Naive thymus-derived CD4-positive, alpha-beta T cell (primary cell): ENCODE measurements at regions of chr19 and their contacts with region 1.

Region 1: GRCh38 chr19:38335949-38336637 is 463 bp downstream of the CATSPERG start:
- DNase-seq: peak; percentile 86 to 94 (median 93)
- ATAC-seq: peak; percentile 77
- H3K4me3 ChIP-seq: peak overlapping the region; percentile 92
- H3K4me3 Mint-ChIP-seq: peak overlapping the region; percentile 92 to 100 (median 96)
- H3K27ac ChIP-seq: peak overlapping the region; percentile 86
- H3K27ac Mint-ChIP-seq: peak overlapping the region; percentile 91 to 100 (median 97)
- H3K4me1 ChIP-seq: peaks cover 3 to 5% of the 10 kb centered on the region in 2 donors
- H3K4me1 Mint-ChIP-seq: peaks cover 16 to 28% (median 17%) of the 10 kb centered on the region in 7 donors
- H3K27me3 ChIP-seq: no peaks in the 10 kb centered on the region
- H3K27me3 Mint-ChIP-seq: no peaks in the 10 kb centered on the region

Region 2: DNA sequence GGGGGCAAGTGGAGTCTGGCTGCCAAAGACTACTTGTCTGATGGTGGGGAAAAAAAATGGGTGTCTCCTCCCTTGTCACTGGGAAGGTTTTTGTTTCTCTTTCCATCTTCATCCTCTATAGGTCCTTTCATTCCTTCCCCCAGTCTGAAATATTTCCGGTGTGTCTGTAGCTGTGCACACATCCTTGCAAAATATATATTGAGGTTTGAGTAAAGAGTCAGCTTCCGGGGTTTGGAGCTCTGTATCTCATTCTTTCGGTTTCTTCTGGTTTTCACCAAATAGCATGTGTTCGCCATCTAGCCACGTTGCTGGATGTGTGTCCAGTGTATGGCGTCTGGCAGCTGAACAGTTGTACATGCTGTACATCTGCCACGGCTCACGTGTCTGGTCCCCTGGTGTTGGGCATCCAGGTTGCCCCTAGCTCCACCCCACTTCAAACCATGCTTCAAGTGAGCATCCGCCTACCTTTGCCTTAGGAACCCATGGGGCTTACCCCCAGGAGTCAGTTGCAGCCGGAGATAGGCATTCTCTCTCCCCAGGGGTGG is 286.9 kb before region 1 on chr19:
- CTCF ChIA-PET with region 1: no interaction called
- POLR2A ChIA-PET with region 1: no interaction called
- intact Hi-C with region 1: loop called in 1 of 2 experiments (anchors 1 kb)
- DNase-seq: peak; percentile 20 to 87 (median 82)
- ATAC-seq: peak; percentile 89
- H3K4me3 ChIP-seq: peak overlapping the region; percentile 19
- H3K4me3 Mint-ChIP-seq: peak overlapping the region; percentile 71 to 91 (median 85)
- H3K27ac ChIP-seq: peak overlapping the region; percentile 74
- H3K27ac Mint-ChIP-seq: peak overlapping the region; percentile 94 to 100 (median 97)
- H3K4me1 ChIP-seq: peaks cover 20 to 36% of the 10 kb centered on the region in 2 donors
- H3K4me1 Mint-ChIP-seq: peaks cover 22 to 56% (median 44%) of the 10 kb centered on the region in 7 donors
- H3K27me3 ChIP-seq: no peaks in the 10 kb centered on the region
- H3K27me3 Mint-ChIP-seq: peaks cover 0 to 2% (median 0%) of the 10 kb centered on the region in 5 donors

Region 3: DNA sequence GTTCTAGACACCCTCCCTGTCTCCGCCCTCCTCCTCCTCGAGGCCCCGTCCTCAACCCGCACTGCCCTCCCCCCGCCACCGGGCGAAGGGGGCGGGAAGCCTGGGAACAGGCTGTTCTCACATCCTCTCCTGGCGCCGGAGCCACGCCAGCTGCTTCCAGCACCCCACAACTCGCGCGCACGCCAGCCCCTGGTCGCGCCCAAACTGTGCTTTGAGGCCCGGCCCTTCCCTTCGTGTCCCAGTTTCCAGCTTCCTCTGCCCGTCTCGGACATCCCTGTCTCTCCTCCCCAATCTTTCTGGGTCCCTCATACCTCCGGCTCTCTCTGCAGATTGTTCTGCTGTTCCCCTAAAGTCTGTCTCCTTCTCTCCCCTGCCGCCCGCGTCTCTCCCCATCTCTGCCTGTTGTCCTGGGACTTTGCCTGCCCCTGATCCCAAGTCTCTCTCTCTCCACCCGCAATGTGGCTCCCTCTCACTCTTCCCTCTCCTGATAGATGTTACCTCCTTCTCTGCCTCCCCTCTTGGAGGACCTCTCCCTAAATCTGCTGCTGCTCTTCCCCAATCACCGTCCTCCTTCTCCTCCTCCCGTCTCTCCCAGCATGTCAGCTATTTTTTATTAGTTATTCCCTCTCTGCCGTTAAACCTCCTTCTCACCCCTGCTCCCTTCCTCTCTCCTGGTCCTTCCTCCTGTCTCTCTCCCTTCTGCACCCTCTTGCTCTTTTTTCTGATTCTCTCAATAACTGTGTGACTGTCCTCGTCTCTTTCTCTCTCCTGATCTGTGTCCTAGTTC is 126.2 kb before region 1 on chr19:
- CTCF ChIA-PET with region 1: no interaction called
- POLR2A ChIA-PET with region 1: no interaction called
- intact Hi-C with region 1: no loop called
- DNase-seq: no peak
- ATAC-seq: no peak
- H3K4me3 ChIP-seq: no peak overlapping the region
- H3K4me3 Mint-ChIP-seq: peak overlapping the region in 5 of 10 donors; percentile 6 to 64 (median 58)
- H3K27ac ChIP-seq: no peak overlapping the region
- H3K27ac Mint-ChIP-seq: peak overlapping the region in 2 of 9 donors; percentile 2 to 10
- H3K4me1 ChIP-seq: peaks cover 0 to 8% of the 10 kb centered on the region in 2 donors
- H3K4me1 Mint-ChIP-seq: peaks cover 13 to 27% (median 22%) of the 10 kb centered on the region in 7 donors
- H3K27me3 ChIP-seq: peaks cover 0 to 13% of the 10 kb centered on the region in 2 donors
- H3K27me3 Mint-ChIP-seq: peaks cover 32 to 56% (median 49%) of the 10 kb centered on the region in 5 donors

Region 4: GRCh38 chr19:38229585-38230073 is 106.5 kb before region 1 on chr19:
- CTCF ChIA-PET with region 1: interaction called, 3 read pairs
- POLR2A ChIA-PET with region 1: no interaction called
- intact Hi-C with region 1: loop called (anchors 1 to 5 kb)
- DNase-seq: peak in 8 of 9 donors; percentile 20 to 75 (median 41)
- ATAC-seq: peak; percentile 91
- H3K4me3 ChIP-seq: no peak overlapping the region
- H3K4me3 Mint-ChIP-seq: peak overlapping the region; percentile 7 to 77 (median 54)
- H3K27ac ChIP-seq: no peak overlapping the region
- H3K27ac Mint-ChIP-seq: no peak overlapping the region
- H3K4me1 ChIP-seq: peaks cover 0 to 7% of the 10 kb centered on the region in 2 donors
- H3K4me1 Mint-ChIP-seq: peaks cover under 1 to 20% (median 15%) of the 10 kb centered on the region in 7 donors
- H3K27me3 ChIP-seq: peaks cover 5 to 16% of the 10 kb centered on the region in 2 donors
- H3K27me3 Mint-ChIP-seq: peaks cover 45 to 66% (median 57%) of the 10 kb centered on the region in 5 donors

Region 5: GRCh38 chr19:38315657-38316476 is 20.2 kb before region 1 on chr19 and contains the start of gene YIF1B:
- CTCF ChIA-PET with region 1: interaction called, 3 read pairs
- POLR2A ChIA-PET with region 1: interaction called, 3 read pairs
- intact Hi-C with region 1: loop called (anchors 1 kb)
- DNase-seq: peak; percentile 93 to 97 (median 95)
- ATAC-seq: peak; percentile 95
- H3K4me3 ChIP-seq: peak within 1 kb of the TSS; percentile 90
- H3K4me3 Mint-ChIP-seq: peak within 1 kb of the TSS; percentile 87 to 96 (median 91)
- H3K27ac ChIP-seq: peak within 1 kb of the TSS; percentile 97
- H3K27ac Mint-ChIP-seq: peak within 1 kb of the TSS; percentile 90 to 97 (median 93)
- H3K4me1 ChIP-seq: peaks cover 14 to 30% of the 10 kb centered on the region in 2 donors
- H3K4me1 Mint-ChIP-seq: peaks cover 29 to 57% (median 48%) of the 10 kb centered on the region in 7 donors
- H3K27me3 ChIP-seq: no peaks in the 10 kb centered on the region
- H3K27me3 Mint-ChIP-seq: no peaks in the 10 kb centered on the region
- total RNA-seq, gene YIF1B: 26.1 to 84.7 (median 38.0) TPM

Region 6: DNA sequence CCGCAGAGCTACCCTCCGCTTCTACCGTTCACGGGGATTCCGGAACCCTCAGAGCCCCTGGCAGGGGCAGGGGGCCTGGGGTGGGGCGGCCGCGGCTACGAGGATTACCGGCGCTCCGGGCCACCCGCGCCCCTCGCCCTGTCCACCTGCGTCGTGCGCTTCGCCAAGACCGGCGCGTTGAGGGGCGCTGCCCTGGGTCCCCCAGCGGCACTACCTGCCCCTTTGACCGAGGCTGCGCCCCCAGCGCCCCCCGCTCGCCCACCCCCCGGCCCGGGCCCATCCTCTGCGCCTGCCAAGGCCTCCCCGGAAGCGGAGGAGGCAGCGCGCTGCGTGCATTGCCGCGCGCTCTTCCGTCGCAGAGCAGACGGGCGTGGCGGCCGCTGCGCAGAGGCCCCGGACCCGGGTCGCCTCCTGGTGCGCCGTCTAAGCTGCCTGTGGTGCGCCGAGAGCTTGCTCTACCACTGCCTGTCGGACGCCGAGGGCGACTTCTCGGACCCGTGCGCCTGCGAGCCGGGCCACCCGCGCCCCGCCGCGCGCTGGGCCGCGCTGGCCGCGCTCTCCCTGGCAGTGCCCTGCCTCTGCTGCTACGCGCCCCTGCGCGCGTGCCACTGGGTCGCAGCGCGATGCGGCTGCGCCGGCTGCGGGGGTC is 59.5 kb after region 1 on chr19:
- CTCF ChIA-PET with region 1: no interaction called
- POLR2A ChIA-PET with region 1: no interaction called
- intact Hi-C with region 1: no loop called
- DNase-seq: peak in 8 of 9 donors; percentile 36 to 66 (median 58)
- ATAC-seq: peak; percentile 79
- H3K4me3 ChIP-seq: peak overlapping the region; percentile 56
- H3K4me3 Mint-ChIP-seq: peak overlapping the region; percentile 65 to 84 (median 81)
- H3K27ac ChIP-seq: peak overlapping the region; percentile 60
- H3K27ac Mint-ChIP-seq: peak overlapping the region in 6 of 9 donors; percentile 5 to 91 (median 82)
- H3K4me1 ChIP-seq: peaks cover 5 to 19% of the 10 kb centered on the region in 2 donors
- H3K4me1 Mint-ChIP-seq: peaks cover 8 to 27% (median 22%) of the 10 kb centered on the region in 7 donors
- H3K27me3 ChIP-seq: no peaks in the 10 kb centered on the region
- H3K27me3 Mint-ChIP-seq: peaks cover 0 to 33% (median 5%) of the 10 kb centered on the region in 5 donors

Region 7: DNA sequence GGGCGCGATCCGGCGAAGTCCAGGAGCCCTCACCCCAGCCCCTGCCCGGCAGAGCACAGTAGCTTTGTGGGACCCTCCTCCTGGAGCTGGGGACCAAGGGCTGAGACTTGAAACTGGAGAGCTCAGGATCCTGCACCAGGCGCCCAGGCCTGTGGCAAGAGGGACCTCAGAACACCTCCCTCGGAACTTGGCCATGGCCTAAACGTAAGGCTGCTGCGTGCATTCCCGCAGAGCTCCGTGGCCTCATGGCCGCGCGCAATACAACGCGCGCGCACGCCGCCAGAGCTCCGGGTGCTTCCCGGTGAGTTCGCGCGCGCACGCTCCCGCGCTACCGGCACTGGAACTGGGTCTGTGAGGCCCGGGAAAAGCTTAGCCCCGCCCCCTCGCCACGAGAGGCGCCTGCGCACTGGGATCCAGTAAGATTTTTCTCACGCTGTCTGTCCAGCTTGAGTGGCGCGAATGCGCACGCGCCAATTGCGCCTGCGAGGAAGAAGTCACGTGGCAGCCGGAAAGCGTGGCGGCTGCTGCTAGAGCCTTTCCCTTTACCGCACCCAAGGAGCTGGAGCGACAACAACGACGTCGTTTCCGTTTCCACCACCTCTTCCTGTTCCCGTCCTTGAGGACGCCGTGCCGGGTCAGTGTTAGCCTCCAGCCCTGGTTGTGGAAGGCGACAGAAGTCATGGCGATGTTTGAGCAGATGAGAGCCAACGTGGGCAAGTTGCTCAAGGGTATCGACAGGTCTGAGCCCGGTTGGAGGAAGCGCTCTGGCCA is 282.7 kb after region 1 on chr19 and contains the start of gene EIF3K:
- CTCF ChIA-PET with region 1: interaction called, 3 read pairs
- POLR2A ChIA-PET with region 1: no interaction called
- intact Hi-C with region 1: loop called (anchors 1 kb)
- DNase-seq: peak; percentile 94 to 99 (median 96)
- ATAC-seq: peak; percentile 86
- H3K4me3 ChIP-seq: peak within 1 kb of the TSS; percentile 96
- H3K4me3 Mint-ChIP-seq: peak within 1 kb of the TSS; percentile 95 to 100 (median 98)
- H3K27ac ChIP-seq: peak within 1 kb of the TSS; percentile 99
- H3K27ac Mint-ChIP-seq: peak within 1 kb of the TSS; percentile 89 to 100 (median 97)
- H3K4me1 ChIP-seq: peaks cover 33 to 40% of the 10 kb centered on the region in 2 donors
- H3K4me1 Mint-ChIP-seq: peaks cover 38 to 61% (median 44%) of the 10 kb centered on the region in 7 donors
- H3K27me3 ChIP-seq: no peaks in the 10 kb centered on the region
- H3K27me3 Mint-ChIP-seq: no peaks in the 10 kb centered on the region
- total RNA-seq, gene EIF3K: 294 to 405 (median 337) TPM